GM12878 (cell line): ENCODE measurements at regions of chr16 and their contacts with region 1.

Region 1: GRCh38 chr16:35598696-35599332 is 2139.4 kb downstream of the TP53TG3F start:
- DNase-seq: no peak
- ATAC-seq: peak; percentile 72
- H3K4me3 ChIP-seq: no peak overlapping the region
- H3K27ac ChIP-seq: no peak overlapping the region
- H3K4me1 ChIP-seq: no peaks in the 10 kb centered on the region
- H3K27me3 ChIP-seq: no peaks in the 10 kb centered on the region
- CTCF ChIP-seq: no peak
- EP300 ChIP-seq: no peak
- POLR2A ChIP-seq: no peak
- RAD21 ChIP-seq: no peak

Region 2: DNA sequence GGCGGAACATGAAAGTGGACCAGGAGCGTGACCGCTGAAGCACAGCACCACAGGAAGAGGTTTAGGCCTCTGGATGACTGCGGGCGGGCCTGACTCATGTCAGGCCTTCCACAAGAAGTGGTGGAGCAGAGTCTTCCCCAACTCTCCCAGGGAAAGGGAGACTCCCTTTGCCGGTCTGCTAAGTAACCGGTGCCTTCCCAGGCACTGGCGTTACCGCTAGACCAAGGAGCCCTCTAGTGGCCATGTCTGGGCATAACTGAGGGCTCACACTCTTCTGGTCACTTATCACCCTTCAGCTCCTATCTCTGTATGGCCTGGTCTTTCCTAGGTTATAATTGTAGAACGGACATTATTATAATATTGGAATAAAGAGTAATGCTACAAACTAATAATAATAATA is 207.5 kb before region 1 on chr16:
- CTCF ChIA-PET with region 1: no interaction called
- POLR2A ChIA-PET with region 1: no interaction called
- RAD21 ChIA-PET with region 1: no interaction called
- SMC1A ChIA-PET with region 1: no interaction called
- in situ Hi-C with region 1: loop called (anchors 25 kb)
- intact Hi-C with region 1: no loop called
- DNase-seq: no peak
- ATAC-seq: peak; percentile 44; the same call in 1 of the 3 replicates
- H3K4me3 ChIP-seq: no peak overlapping the region
- H3K27ac ChIP-seq: no peak overlapping the region
- H3K4me1 ChIP-seq: no peaks in the 10 kb centered on the region
- H3K27me3 ChIP-seq: no peaks in the 10 kb centered on the region
- CTCF ChIP-seq: peak; percentile 51 to 73 (median 53)
- EP300 ChIP-seq: no peak
- POLR2A ChIP-seq: no peak
- RAD21 ChIP-seq: peak; percentile 53

Region 3: DNA sequence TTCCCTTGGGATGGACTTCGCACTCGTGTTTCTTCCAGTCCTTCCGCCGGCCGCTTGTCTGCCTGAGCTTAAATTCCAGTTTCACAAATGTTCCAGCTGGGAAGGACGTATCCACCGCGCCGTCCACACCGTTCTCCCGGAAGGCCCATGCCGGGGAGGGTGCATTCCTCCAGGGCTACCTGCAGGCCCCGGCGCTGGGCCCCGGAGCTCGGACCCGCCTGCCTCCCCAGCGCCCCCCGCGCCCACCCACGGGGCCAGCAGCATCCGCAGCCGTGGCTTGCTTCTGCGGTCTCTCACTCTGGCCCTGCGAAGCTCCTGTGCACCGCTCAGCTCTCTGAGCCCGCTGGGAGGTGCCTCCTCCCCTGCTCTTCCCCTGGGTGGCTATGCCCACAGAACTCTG is 55.3 kb before region 1 on chr16:
- CTCF ChIA-PET with region 1: no interaction called
- POLR2A ChIA-PET with region 1: no interaction called
- RAD21 ChIA-PET with region 1: no interaction called
- SMC1A ChIA-PET with region 1: no interaction called
- in situ Hi-C with region 1: loop called (anchors 10 kb)
- intact Hi-C with region 1: no loop called
- DNase-seq: no peak
- ATAC-seq: no peak
- H3K4me3 ChIP-seq: no peak overlapping the region
- H3K27ac ChIP-seq: no peak overlapping the region
- H3K4me1 ChIP-seq: no peaks in the 10 kb centered on the region
- H3K27me3 ChIP-seq: no peaks in the 10 kb centered on the region
- CTCF ChIP-seq: no peak
- EP300 ChIP-seq: no peak
- POLR2A ChIP-seq: no peak
- RAD21 ChIP-seq: no peak

Region 4: DNA sequence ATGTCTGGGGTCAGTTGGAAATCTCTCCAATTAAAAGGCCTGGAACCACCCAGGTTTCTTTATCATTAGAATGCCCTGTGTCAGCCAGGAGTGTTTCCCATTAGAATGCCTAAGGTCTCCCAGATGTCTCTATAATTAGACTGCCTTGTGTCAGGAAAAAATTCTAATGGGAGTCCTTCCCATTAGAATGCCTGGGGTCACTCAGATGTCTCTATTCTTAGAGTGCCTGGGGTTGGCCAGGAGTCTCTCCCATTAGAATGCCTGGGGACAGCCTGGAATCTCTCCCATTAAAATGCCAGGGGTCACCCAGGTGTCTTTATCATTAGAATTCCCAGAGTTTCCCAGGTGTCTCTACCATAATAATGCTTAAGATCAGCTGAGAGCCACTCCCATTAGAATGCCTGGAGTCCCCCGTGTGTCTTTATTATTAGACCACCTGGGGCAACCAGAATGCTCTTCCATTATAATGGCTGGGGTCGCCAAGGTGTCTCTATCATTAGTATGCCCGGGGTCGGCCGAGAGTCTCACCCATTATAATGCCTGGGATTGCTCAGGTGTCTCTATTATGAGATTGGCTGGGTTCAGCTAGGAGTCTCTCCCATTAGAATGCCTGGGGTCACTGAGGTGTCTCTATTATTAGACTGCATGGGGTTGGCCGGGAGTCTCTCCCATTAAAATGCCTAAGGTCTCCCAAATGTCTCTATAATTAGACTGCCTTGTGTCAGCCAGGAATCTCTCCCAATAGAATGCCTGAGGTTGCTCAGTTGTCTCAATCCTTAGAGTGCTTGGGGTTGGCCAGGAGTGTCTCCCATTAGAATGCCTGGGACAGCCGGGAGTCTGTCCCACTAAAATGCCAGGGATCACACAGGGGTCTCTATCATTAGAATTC is 115.2 kb after region 1 on chr16:
- CTCF ChIA-PET with region 1: no interaction called
- POLR2A ChIA-PET with region 1: no interaction called
- RAD21 ChIA-PET with region 1: no interaction called
- SMC1A ChIA-PET with region 1: no interaction called
- in situ Hi-C with region 1: loop called (anchors 25 kb)
- intact Hi-C with region 1: no loop called
- DNase-seq: no peak
- ATAC-seq: no peak
- H3K4me3 ChIP-seq: no peak overlapping the region
- H3K27ac ChIP-seq: no peak overlapping the region
- H3K4me1 ChIP-seq: no peaks in the 10 kb centered on the region
- H3K27me3 ChIP-seq: no peaks in the 10 kb centered on the region
- CTCF ChIP-seq: no peak
- EP300 ChIP-seq: no peak
- POLR2A ChIP-seq: no peak
- RAD21 ChIP-seq: no peak